H1 (cell line): ENCODE measurements at regions of chr12 and their contacts with region 1.

Region 1: DNA sequence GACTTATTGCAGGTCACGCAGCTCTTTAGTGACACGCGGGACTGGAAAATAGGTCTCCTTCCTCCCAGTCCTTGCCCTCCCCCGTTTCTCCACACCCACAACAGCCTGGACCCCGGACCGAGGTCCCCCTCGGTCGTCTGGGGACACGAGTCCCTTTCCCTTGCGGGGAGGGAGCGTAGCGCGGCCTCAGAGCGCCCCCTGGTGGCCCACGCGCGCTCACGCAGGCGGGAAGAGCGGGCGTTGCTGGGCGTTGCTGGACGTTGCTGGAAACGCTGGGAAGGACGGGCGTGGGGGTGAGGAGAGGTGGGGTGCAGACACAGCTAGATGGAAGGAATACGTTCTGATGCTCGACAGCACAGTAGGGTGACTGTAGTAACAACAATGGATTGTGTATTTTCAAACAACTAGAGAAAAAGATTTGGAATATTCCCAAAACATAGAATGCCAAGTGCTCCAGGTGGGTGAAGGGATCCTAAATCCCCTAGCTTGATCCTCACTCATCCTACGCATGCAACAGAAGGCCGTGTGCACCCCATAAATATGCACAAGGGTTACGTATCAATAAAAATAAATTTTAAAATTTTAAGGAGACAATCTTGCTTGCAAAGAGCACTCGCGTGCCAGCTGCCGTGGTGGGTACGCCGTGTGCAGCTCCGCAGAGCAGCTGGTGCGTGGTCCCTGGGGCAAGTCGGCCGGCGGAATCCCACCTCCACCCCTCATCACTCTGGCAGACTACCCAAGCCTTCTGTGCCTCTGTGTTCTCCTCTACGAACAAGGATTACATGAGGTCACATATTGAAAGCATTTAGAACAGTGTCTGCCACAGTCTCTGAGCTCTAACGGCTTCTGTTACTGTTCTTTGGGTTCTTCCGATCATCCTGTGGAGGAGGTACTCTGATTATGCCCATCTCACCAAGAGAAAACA is 87.4 kb downstream of the B4GALNT3 start:
- DNase-seq: peak in 1 of 2 experiments; percentile 89
- H3K4me3 ChIP-seq: no peak overlapping the region
- H3K27ac ChIP-seq: no peak overlapping the region
- H3K4me1 ChIP-seq: peaks cover 0 to 8% (median 4%) of the 10 kb centered on the region in 4 experiments; a peak in 3 of 7 replicates
- H3K27me3 ChIP-seq: no peaks in the 10 kb centered on the region
- CTCF ChIP-seq: peak; percentile 92 to 99 (median 94)
- EP300 ChIP-seq: no peak
- POLR2A ChIP-seq: no peak
- RAD21 ChIP-seq: peak; percentile 99

Region 2: DNA sequence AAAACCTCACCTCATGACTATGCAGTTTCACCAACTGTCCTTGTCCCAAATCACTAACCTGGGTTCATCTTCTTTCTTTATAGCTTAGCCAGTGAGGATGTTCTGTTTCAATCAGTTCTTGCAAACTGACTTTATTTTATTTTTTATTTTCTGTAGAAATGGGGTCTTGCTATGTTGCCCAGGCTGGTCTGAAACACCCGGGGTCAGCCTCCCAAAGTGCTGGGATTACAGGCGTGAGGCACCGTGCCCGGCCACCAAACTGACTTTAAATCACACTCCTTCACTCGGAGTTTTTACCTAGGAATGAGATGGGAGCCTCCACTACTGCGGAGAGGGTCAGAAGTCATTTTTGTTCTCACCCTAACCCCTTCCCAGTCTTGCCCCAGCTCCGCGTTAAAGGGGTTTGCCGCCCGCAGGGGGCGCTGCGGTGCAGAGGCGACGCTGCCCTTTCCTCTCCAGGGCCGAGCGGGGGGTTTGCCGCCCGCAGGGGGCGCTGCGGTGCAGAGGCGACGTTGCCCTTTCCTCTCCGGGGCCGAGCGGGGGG is 94.4 kb before region 1 on chr12:
- CTCF ChIA-PET with region 1: interaction called, 163 read pairs
- POLR2A ChIA-PET with region 1: interaction called, 4 read pairs
- DNase-seq: peak in 1 of 2 experiments; percentile 80
- H3K4me3 ChIP-seq: peak overlapping the region in 1 of 4 experiments; percentile 27; a peak in 1 of 8 replicates
- H3K27ac ChIP-seq: no peak overlapping the region
- H3K4me1 ChIP-seq: no peaks in the 10 kb centered on the region
- H3K27me3 ChIP-seq: no peaks in the 10 kb centered on the region; a peak in 2 of 7 replicates
- CTCF ChIP-seq: peak in 2 of 3 experiments; percentile 41 to 57; a peak in 2 of 4 replicates
- EP300 ChIP-seq: no peak
- POLR2A ChIP-seq: no peak
- RAD21 ChIP-seq: no peak

Region 3: DNA sequence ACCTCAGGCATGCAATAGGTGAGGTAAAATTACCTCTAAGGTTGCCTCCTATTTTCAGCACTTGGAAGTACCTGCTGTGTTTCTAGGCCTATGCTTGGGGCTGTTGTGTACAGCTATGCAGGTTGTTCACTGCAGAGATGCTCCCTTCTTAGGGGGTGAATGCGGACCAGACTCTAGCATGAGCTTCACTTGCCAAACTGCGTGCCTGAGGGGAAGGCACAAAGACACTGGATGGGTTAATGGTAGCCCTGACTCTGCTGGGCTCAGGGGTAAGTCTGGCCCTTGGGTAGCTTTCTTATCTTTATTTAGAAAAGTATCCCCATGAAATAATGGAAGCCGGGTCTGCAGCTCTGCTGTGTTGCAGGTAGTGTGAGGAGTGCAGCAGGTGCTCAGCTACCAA is 51.7 kb before region 1 on chr12:
- CTCF ChIA-PET with region 1: interaction called, 14 read pairs
- POLR2A ChIA-PET with region 1: no interaction called
- DNase-seq: no peak
- H3K4me3 ChIP-seq: no peak overlapping the region
- H3K27ac ChIP-seq: no peak overlapping the region
- H3K4me1 ChIP-seq: no peaks in the 10 kb centered on the region; a peak in 1 of 7 replicates
- H3K27me3 ChIP-seq: no peaks in the 10 kb centered on the region
- CTCF ChIP-seq: no peak
- EP300 ChIP-seq: no peak
- POLR2A ChIP-seq: no peak
- RAD21 ChIP-seq: no peak

Region 4: DNA sequence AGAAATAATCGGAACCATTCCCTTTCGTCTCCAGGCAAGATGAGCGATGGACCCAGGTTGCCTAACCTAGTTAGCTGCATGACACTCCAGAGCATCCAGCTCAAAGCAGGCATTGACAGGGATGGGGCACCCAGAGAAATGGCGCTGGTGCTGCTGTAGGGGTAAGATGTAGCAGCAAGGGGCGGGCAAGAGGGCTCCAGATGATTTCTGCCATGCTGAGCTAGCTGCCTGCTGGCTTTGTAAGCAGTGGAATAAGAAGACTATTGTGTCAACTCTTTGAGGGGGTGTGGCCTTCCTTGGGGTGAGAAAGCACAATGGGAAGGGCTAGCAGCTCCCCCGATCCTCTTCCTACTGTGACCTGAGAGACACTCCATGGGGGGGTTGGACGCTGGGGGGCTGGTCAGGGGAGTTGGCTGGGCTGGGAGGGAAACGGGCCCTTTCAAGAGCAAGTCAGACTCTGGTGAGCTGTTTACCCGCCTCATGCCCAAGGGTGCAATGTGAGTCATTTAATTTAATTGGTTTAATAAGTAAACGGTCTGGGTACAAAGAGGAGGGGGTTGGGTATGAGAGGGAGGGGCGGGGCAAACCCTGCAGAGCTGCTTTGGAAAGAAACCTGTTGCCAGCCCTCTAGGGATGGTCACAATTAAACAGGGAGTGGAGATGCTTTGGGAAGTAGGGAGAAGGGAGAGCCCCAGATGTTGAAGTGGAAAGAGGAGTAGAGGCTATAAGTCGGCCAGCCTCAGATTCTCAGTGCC is 36.9 kb before region 1 on chr12:
- CTCF ChIA-PET with region 1: interaction called, 15 read pairs
- POLR2A ChIA-PET with region 1: no interaction called
- DNase-seq: peak; percentile 49 to 57
- H3K4me3 ChIP-seq: peak overlapping the region in 1 of 4 experiments; percentile 36; a peak in 1 of 8 replicates
- H3K27ac ChIP-seq: no peak overlapping the region
- H3K4me1 ChIP-seq: peaks cover 13 to 20% (median 15%) of the 10 kb centered on the region in 4 experiments
- H3K27me3 ChIP-seq: no peaks in the 10 kb centered on the region
- CTCF ChIP-seq: no peak
- EP300 ChIP-seq: no peak
- POLR2A ChIP-seq: no peak
- RAD21 ChIP-seq: no peak; a peak in 1 of 4 replicates

Region 5: GRCh38 chr12:530308-530707 is 16.9 kb before region 1 on chr12:
- CTCF ChIA-PET with region 1: interaction called, 25 read pairs
- POLR2A ChIA-PET with region 1: no interaction called
- DNase-seq: no peak
- H3K4me3 ChIP-seq: no peak overlapping the region
- H3K27ac ChIP-seq: no peak overlapping the region
- H3K4me1 ChIP-seq: peaks cover 0 to 3% (median 0%) of the 10 kb centered on the region in 4 experiments; a peak in 1 of 7 replicates
- H3K27me3 ChIP-seq: no peaks in the 10 kb centered on the region
- CTCF ChIP-seq: no peak
- EP300 ChIP-seq: no peak
- POLR2A ChIP-seq: no peak
- RAD21 ChIP-seq: no peak

Region 6: DNA sequence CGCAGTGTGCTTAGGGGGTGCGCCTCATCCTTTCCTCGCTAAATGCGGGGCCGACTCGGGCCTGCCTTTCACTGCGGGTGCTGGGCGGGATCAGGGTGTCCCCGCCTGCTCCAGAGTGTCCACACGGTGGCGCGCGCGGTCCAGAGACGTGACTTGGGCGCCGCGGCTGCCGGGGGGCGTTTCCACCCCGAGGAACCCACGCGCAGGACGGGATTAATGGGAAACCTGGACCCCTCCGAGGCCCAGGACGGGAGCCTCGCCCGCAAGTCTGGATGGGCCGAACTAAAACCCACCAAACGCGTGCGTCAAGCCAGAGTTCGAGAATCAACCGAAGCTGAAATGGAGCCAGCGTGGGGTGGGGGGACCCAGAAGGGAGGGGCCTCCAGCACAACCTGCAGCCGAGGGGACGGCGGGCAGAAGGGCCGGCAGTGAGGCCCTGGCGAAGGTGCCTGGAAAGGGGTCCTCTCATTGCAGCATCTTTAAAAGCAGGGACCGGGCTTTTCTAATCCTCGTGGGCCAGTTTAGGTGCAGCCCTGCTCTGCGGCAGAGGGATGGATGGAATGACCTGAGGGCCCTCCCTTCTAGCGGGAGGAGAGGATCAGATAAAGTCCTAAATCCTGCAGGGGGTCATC is 22.7 kb after region 1 on chr12:
- CTCF ChIA-PET with region 1: interaction called, 11 read pairs
- POLR2A ChIA-PET with region 1: interaction called, 3 read pairs
- DNase-seq: peak in 1 of 2 experiments; percentile 95
- H3K4me3 ChIP-seq: peak overlapping the region; percentile 28 to 82 (median 64)
- H3K27ac ChIP-seq: no peak overlapping the region
- H3K4me1 ChIP-seq: peaks cover 0 to 9% (median 6%) of the 10 kb centered on the region in 4 experiments; a peak in 5 of 7 replicates
- H3K27me3 ChIP-seq: peaks cover 0 to 4% (median 3%) of the 10 kb centered on the region in 4 experiments; a peak in 2 of 7 replicates
- CTCF ChIP-seq: peak in 2 of 3 experiments; percentile 86; a peak in 3 of 4 replicates
- EP300 ChIP-seq: no peak
- POLR2A ChIP-seq: no peak
- RAD21 ChIP-seq: peak; percentile 86 to 88

Region 7: GRCh38 chr12:591167-592023 is 44.2 kb after region 1 on chr12:
- CTCF ChIA-PET with region 1: no interaction called
- POLR2A ChIA-PET with region 1: no interaction called
- DNase-seq: no peak
- H3K4me3 ChIP-seq: no peak overlapping the region
- H3K27ac ChIP-seq: no peak overlapping the region
- H3K4me1 ChIP-seq: no peaks in the 10 kb centered on the region
- H3K27me3 ChIP-seq: no peaks in the 10 kb centered on the region
- CTCF ChIP-seq: peak in 2 of 3 experiments; percentile 11 to 41; a peak in 2 of 4 replicates
- EP300 ChIP-seq: no peak
- POLR2A ChIP-seq: no peak
- RAD21 ChIP-seq: no peak; a peak in 1 of 4 replicates

Region 8: GRCh38 chr12:751192-751998 is 204.2 kb after region 1 on chr12:
- CTCF ChIA-PET with region 1: no interaction called
- POLR2A ChIA-PET with region 1: no interaction called
- DNase-seq: peak; percentile 89 to 94
- H3K4me3 ChIP-seq: peak overlapping the region; percentile 48 to 71 (median 55)
- H3K27ac ChIP-seq: peak overlapping the region; percentile 74
- H3K4me1 ChIP-seq: peaks cover 3 to 11% (median 4%) of the 10 kb centered on the region in 4 experiments; a peak in 6 of 7 replicates
- H3K27me3 ChIP-seq: no peaks in the 10 kb centered on the region
- CTCF ChIP-seq: peak; percentile 74 to 84 (median 77)
- EP300 ChIP-seq: no peak
- POLR2A ChIP-seq: peak; percentile 31 to 79
- RAD21 ChIP-seq: peak; percentile 69 to 78